ENCODE measurements at regions of chr1 and their contacts with region 1.

Region 1: DNA sequence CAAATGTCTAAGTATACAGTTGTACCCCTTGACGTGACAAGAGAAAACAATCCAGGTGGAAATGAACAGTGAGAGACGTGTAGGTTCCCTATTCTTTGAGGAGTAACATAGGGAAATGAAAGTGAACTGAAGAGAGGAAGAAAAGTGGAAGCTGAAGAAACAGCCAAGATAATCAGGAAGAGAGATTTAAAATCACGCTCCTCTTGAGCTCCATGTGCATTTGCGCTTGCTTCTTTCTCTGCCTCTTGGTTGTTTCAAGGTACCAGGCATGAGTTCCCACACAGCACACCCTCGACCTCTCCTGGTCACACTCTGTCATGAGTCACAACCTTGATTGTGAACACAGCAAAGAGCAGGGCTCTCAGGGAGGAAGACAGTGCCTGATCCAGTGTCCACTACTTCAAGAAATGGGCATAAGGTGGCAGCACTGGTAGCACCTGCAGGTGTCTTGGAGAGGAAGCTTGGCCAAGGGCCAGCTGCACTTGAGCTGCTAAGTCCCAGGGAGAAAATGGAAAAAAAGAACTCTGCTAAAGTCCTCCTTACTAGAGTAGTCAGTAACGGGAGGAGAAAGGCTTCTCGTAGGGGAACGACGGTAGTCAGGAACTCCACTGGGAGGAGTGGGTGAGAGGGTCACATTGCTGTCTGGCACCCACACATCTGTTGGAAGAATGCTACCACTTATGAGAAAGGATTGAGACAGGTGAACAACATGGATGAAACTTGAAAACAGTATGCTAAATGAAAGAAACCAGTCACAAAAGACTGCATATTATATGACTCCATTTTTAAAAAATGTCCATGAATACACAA is 18.3 kb upstream of the ARID1A start:
- DNase-seq: peak; percentile 74
- CTCF ChIP-seq: peak; percentile 57

Region 2: DNA sequence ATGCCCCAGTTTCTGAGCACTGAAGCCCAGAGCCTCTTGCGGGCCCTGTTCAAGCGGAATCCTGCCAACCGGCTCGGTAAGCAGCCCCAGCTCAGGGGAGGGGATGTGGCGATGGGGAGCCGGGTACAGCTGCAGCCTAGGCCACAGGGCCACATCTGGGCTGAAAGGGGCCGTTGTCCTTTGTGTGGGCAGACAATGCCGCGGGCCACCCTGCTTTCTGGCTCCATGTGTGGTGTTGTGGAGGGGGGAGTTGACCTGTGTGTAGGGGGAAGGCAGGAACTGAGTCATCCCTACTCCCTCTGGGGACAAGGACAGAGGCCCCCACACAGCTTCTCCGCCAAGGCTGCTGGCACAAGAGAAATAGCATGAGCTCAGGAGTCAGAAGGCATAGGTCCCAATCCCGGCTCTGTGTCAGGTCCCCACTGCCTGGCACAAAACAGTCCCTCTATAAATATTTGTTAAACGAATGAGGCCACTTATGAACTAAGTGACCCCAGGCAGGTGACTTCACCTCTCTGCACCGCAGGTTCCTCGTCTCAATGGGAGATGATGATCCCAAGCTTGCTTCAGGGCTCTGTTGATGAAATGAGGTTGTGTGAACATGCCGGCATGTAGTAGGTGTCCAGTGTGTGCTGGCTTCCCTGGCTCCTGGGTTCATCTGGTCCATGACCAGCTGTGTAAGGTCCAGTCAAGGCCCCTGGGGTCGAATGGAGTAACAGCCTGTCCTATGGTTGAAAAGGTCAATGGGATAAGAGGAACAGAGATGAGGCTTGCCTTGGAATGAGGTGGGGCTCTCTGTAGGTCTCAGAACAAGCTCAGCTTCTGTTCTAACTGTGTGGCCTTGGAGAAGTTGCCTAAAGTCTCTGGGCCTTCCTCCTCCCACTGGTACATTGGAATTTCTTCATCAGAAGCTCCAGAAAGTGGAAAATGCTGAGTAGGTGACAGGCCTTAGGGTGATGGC is 121.7 kb before region 1 on chr1:
- CTCF ChIA-PET with region 1: no interaction called
- POLR2A ChIA-PET with region 1: no interaction called
- DNase-seq: no peak
- CTCF ChIP-seq: no peak

Region 3: GRCh38 chr1:26608895-26609294 is 68.6 kb before region 1 on chr1:
- CTCF ChIA-PET with region 1: interaction called, 10 read pairs
- POLR2A ChIA-PET with region 1: no interaction called
- DNase-seq: no peak
- CTCF ChIP-seq: peak; percentile 21

Region 4: DNA sequence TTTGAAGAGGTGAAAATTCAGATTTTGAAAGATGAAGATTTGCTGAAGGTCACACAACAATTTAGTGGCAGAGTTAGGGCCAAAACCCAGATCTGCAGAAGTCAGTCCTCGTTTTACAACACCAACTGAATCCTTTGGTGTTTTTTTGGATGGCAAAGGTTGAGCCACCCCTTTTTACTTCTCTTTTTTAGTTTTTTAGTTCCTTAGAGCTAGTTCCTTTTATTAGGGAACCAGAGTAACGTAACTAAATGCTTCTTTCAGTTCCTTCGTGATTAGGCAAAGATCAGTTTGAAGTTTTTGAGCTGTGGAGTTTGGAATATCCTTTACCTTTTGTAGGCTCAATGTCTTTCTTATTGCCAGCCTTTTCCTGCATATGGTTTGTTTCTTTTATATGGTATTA is 49.6 kb before region 1 on chr1:
- CTCF ChIA-PET with region 1: interaction called, 12 read pairs
- POLR2A ChIA-PET with region 1: no interaction called
- DNase-seq: peak; percentile 46
- CTCF ChIP-seq: no peak

Region 5: DNA sequence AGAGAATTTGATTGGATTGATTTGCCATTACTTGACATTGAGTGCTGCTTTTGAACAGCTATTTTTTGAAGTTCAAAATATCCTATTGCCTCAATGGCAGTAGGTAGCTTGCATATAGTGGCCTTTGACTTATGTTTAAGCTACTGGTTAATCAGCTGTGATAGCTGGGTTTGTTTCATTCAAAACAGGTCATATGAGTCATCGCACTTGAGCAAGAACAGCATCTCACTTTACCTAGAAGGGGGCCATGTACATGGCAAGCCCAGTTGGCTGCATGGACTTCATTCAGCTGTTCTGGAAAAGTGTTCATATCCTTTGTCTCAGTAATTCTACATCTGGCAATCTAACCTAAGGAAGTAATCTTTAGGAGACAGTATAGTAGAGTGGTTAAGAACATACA is 10.7 kb before region 1 on chr1:
- CTCF ChIA-PET with region 1: interaction called, 26 read pairs
- POLR2A ChIA-PET with region 1: no interaction called
- DNase-seq: no peak
- CTCF ChIP-seq: no peak

Region 6: DNA sequence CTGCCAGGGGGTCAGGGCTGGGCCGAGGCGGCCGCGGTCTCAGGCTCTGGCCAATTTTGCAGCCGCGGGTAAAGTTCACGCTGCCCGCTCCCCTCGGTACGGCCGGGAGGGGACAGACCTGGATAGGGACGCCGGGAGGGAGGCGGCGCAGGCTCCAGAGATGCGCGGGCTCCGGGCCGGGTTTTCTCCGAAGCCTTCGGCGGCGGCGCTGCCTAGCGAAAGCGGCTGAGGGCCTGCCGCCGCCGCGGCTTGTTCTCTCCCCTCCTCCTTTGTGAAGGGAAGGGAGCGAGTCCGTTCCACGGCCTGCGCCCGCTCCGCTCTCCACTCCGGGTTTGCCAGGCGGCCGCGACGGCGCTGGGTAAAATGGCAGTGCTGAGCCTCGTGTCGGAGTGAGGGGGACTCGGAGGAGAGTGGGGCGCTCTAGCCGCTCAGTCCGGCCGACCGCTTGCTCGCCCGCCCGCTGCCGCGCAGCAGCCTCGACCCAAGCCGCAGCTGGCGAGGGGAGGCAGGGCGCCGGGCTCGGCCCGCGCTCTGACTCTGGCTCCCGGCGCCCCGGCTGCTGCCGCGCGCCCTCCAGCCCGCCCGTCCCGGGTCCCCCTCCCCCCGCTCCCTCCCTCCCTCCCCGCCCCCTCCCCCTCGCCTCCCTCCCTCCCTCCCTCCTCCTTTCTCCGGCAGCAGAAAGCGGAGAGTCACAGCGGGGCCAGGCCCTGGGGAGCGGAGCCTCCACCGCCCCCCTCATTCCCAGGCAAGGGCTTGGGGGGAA is 18.0 kb after region 1 on chr1 and contains the start of gene ARID1A:
- CTCF ChIA-PET with region 1: interaction called, 30 read pairs
- POLR2A ChIA-PET with region 1: interaction called, 10 read pairs
- DNase-seq: peak; percentile 86
- CTCF ChIP-seq: no peak

Region 7: DNA sequence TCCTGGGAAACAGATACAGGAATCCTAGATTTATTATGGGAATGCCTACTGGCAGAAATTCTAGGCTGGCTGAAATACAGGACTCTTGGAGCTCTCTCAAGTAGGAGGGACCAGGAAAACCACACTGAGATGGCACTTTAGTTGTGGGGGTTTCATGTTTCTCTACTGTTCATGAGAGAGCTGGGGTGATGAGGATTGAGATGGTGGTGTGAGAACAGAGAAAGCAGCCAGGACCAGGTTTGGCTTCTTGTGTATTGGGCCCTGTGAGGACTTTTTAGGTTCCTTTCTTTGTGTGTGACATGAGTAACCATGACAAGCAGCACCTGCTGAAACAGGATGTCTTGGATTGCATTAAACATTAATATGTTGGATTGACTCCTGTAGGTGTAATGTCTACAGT is 23.2 kb after region 1 on chr1:
- CTCF ChIA-PET with region 1: interaction called, 18 read pairs
- POLR2A ChIA-PET with region 1: no interaction called
- DNase-seq: no peak
- CTCF ChIP-seq: no peak